ENCODE measurements at regions of chr16 and their contacts with region 1.

Region 1: DNA sequence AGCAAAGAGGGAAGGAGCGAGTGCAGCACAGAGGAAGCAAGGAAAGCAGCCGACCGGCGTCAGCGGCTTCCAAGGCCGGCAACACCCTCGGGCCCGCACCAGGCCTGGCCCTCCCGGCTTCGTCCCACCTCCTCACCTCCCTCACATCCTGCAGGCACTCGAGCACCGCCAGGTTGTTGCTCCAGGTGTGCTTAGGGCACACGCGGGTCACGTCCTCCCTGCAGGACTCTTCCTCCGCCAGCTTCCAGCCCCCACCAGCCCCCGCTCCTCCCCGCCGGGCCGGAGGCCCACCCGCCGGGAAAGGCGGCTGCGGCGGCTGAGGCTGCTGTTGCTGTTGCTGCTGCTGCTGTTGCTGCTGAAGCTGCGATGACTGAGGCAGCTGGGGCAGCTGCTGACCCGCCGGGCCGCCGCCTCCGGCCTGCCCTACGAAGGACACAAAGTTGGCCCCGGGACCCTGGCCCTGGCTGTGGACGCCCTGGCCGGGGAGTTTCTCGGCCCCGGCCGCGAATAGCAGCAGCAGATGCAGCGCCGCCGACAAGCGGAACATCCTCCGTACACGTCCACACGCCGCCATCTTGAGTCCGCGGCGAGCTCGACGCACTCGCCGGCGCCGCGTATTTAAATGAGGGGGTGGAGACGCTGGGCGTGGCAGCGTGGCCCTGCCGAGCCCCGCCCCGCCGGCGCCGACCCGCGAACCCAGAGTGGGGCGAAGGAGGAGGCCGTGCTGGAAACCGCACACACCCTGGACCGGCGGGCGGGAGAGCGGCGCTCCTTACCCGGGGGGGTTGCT is at the start of gene GLG1:
- DNase-seq: peak; percentile 90 to 95 (median 92)
- ATAC-seq: peak; percentile 94
- H3K4me3 ChIP-seq: peak within 1 kb of the TSS; percentile 99
- H3K27ac ChIP-seq: peak within 1 kb of the TSS; percentile 93
- H3K4me1 ChIP-seq: peaks cover 10 to 21% of the 10 kb centered on the region in 2 experiments
- H3K27me3 ChIP-seq: no peaks in the 10 kb centered on the region
- CTCF ChIP-seq: no peak
- EP300 ChIP-seq: peak; percentile 35; the same call in 1 of the 2 replicates
- POLR2A ChIP-seq: peak; percentile 97
- RAD21 ChIP-seq: no peak; a peak in 1 of 4 replicates
- polyA plus RNA-seq, gene GLG1: 6.2 to 7.2 TPM

Region 2: GRCh38 chr16:74477226-74477625 is 129.5 kb before region 1 on chr16:
- CTCF ChIA-PET with region 1: no interaction called
- POLR2A ChIA-PET with region 1: no interaction called
- in situ Hi-C with region 1: no loop called
- intact Hi-C with region 1: no loop called
- DNase-seq: no peak
- ATAC-seq: no peak
- H3K4me3 ChIP-seq: no peak overlapping the region
- H3K27ac ChIP-seq: no peak overlapping the region
- H3K4me1 ChIP-seq: peaks cover 0 to 7% of the 10 kb centered on the region in 2 experiments; a peak in 3 of 5 replicates
- H3K27me3 ChIP-seq: no peaks in the 10 kb centered on the region
- CTCF ChIP-seq: no peak
- EP300 ChIP-seq: no peak
- POLR2A ChIP-seq: no peak
- RAD21 ChIP-seq: no peak

Region 3: DNA sequence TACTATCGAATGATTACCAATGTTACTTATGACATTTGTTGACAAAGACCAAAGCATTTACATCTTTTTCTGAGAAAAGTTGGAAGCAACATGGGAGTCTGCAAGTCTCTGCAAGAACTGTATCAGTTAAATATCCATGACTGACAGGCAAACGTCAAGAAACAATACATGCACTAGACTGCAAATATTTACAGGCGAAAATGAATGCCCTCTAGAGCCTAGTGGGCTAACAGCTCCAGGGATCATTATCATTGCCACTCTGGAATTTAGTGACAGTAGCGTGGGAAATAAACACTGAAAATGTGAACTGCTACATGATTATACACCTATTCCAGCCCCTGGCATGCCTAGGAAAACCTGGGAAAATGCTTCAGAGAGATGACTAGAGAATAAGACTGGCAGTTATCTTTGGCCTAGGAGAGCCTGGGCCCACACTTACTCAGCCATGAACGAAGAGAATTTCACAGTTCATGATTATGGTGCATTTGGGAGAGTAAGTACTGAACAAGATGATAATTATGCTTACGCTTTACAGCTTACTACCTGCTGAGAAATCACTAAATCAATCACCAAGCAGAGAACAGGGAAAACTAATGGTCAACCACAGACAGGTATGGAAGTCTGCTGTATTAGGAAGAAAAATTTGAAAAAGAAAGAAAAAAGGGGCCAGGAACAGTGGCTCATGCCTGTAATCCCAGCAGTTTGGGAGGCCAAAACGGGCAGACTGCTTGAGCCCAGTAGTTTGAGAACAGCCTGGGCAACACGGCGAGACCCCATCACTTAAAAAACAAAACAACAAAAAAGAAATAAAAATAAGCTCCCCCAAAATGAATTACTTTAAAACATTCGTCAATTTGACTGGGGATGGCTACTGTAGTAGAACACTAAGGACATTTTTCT is 118.9 kb before region 1 on chr16:
- CTCF ChIA-PET with region 1: no interaction called
- POLR2A ChIA-PET with region 1: no interaction called
- in situ Hi-C with region 1: no loop called
- intact Hi-C with region 1: no loop called
- DNase-seq: no peak
- ATAC-seq: no peak
- H3K4me3 ChIP-seq: no peak overlapping the region
- H3K27ac ChIP-seq: no peak overlapping the region
- H3K4me1 ChIP-seq: no peaks in the 10 kb centered on the region
- H3K27me3 ChIP-seq: no peaks in the 10 kb centered on the region
- CTCF ChIP-seq: no peak
- EP300 ChIP-seq: no peak
- POLR2A ChIP-seq: no peak
- RAD21 ChIP-seq: no peak

Region 4: DNA sequence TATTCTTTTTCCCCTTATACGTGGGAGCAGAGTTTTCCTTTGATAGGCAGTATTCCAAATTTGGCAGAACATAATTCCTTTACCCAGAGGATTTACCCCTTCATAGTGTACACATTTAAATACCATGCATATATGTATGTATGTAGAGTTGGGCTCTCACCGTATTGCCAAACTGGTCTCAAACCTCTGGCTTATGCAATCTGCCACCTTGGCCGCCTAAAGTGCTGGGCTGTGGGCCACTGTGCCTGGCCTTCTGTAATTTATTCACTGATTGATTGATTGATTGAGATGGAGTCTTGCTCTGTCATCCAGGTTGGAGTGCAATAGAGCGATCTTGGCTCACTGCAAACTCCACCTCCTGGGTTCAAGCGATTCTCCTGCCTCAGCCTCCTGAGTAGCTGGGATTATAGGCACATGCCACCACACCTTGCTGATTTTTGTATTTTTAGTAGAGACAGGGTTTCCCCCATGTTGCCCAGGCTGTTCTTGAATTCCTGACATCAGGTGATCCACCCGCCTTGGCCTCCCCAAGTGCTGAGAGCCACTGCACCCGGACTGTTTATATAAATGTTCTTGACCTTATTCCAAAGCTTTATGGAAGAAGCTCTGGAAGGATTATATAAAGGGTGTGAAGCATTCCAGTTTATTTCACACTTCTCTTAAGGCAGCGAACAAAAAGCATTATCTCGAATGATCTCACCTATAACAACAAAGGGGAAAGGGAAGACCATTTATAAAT is 14.7 kb before region 1 on chr16:
- CTCF ChIA-PET with region 1: no interaction called
- POLR2A ChIA-PET with region 1: interaction called, 22 read pairs
- in situ Hi-C with region 1: no loop called
- intact Hi-C with region 1: no loop called
- DNase-seq: no peak
- ATAC-seq: no peak
- H3K4me3 ChIP-seq: no peak overlapping the region
- H3K27ac ChIP-seq: no peak overlapping the region
- H3K4me1 ChIP-seq: peaks cover 12 to 15% of the 10 kb centered on the region in 2 experiments; a peak in 4 of 5 replicates
- H3K27me3 ChIP-seq: no peaks in the 10 kb centered on the region
- CTCF ChIP-seq: no peak
- EP300 ChIP-seq: no peak
- POLR2A ChIP-seq: no peak
- RAD21 ChIP-seq: no peak

Region 5: GRCh38 chr16:74774203-74775116 is 167.7 kb after region 1 on chr16 and contains the start of gene FA2H:
- CTCF ChIA-PET with region 1: no interaction called
- POLR2A ChIA-PET with region 1: no interaction called
- in situ Hi-C with region 1: no loop called
- intact Hi-C with region 1: no loop called
- DNase-seq: peak; percentile 84 to 97 (median 96)
- ATAC-seq: peak; percentile 100
- H3K4me3 ChIP-seq: peak within 1 kb of the TSS; percentile 29
- H3K27ac ChIP-seq: no peak within 1 kb of the TSS
- H3K4me1 ChIP-seq: peaks cover 0 to 12% of the 10 kb centered on the region in 2 experiments; a peak in 4 of 5 replicates
- H3K27me3 ChIP-seq: peaks cover 29 to 55% of the 10 kb centered on the region in 2 experiments
- CTCF ChIP-seq: peak; percentile 8 to 49 (median 15); a peak in 2 of 6 replicates
- EP300 ChIP-seq: no peak
- POLR2A ChIP-seq: no peak
- RAD21 ChIP-seq: no peak
- polyA plus RNA-seq, gene FA2H: not detected